ENCODE measurements at regions of chrX and their contacts with region 1.

Region 1: GRCh38 chrX:118975831-118976598 is 1.6 kb downstream of the LONRF3 start:
- DNase-seq: peak; percentile 86
- H3K4me3 ChIP-seq: peak overlapping the region; percentile 93
- H3K27ac ChIP-seq: peak overlapping the region; percentile 95
- H3K4me1 ChIP-seq: peaks cover 27% of the 10 kb centered on the region
- H3K27me3 ChIP-seq: peaks cover 7% of the 10 kb centered on the region; the same call in 1 of the 2 replicates
- CTCF ChIP-seq: no peak

Region 2: DNA sequence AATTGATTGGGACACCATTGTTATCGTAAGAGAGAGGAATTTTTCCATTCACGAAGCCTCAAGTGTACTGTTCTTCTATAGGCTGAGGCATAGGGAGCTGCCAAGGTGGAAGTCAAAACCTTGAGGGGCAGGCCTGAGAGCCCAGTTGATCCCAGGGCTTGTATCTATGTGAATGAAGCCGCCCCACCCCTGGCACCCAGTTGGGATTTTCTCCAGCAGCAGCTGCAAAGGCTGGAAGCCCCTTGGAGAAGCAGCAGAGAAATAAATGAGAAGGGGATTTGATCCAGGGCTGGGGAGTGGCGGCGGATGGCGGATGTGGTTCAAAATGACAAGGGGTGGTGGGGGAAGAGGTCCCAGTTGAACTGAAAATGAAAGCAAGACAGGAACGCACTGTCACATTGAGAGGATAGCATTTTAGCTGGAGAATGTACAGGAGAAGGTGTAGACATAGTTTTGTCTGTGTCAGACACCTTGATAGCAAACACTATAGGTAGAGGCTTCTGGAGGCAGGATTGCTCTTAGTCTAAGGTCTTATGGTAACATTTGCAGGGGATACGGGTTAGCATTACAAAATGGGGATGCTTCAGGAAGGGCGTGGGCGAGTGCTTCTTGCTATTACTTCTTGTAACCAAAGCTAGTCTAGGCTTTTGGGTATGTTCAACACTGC is 447.8 kb before region 1 on chrX:
- CTCF ChIA-PET with region 1: no interaction called
- POLR2A ChIA-PET with region 1: no interaction called
- intact Hi-C with region 1: no loop called
- DNase-seq: no peak
- H3K4me3 ChIP-seq: no peak overlapping the region
- H3K27ac ChIP-seq: no peak overlapping the region
- H3K4me1 ChIP-seq: no peaks in the 10 kb centered on the region
- H3K27me3 ChIP-seq: no peaks in the 10 kb centered on the region
- CTCF ChIP-seq: no peak

Region 3: GRCh38 chrX:118884552-118885138 is 91.4 kb before region 1 on chrX:
- CTCF ChIA-PET with region 1: no interaction called
- POLR2A ChIA-PET with region 1: no interaction called
- intact Hi-C with region 1: loop called (anchors 2 kb)
- DNase-seq: peak; percentile 68 to 89
- H3K4me3 ChIP-seq: peak overlapping the region; percentile 50; the same call in 1 of the 2 replicates
- H3K27ac ChIP-seq: peak overlapping the region; percentile 82
- H3K4me1 ChIP-seq: 0 out of 2 replicates have a peak, but pooled peaks cover 5% of the 10 kb centered on the region
- H3K27me3 ChIP-seq: no peaks in the 10 kb centered on the region
- CTCF ChIP-seq: no peak

Region 4: GRCh38 chrX:119015407-119016237 is 39.6 kb after region 1 on chrX:
- CTCF ChIA-PET with region 1: no interaction called
- POLR2A ChIA-PET with region 1: interaction called, 3 read pairs
- intact Hi-C with region 1: loop called (anchors 1 kb)
- DNase-seq: peak; percentile 86 to 98
- H3K4me3 ChIP-seq: no peak overlapping the region
- H3K27ac ChIP-seq: peak overlapping the region; percentile 87
- H3K4me1 ChIP-seq: peaks cover 39% of the 10 kb centered on the region
- H3K27me3 ChIP-seq: no peaks in the 10 kb centered on the region
- CTCF ChIP-seq: no peak